Activated T-helper 2 cell treated with anti-CD3 and anti-CD28 coated beads, Interferon-gamma antibody, Interleukin-2, Interleukin-4, amounts not matched to agents 10 μg/mL and 5 μg/mL and 100 μg/mL, durations not matched to agents 14 hours and 24 hours and 36 hours (primary cell): ENCODE measurements at regions of chr11 and their contacts with region 1.

Region 1: GRCh38 chr11:47035108-47035507 is 98.5 kb downstream of the CSTPP1 start:
- DNase-seq: no peak
- H3K4me3 Mint-ChIP-seq: no peak overlapping the region
- H3K27ac Mint-ChIP-seq: no peak overlapping the region
- H3K4me1 Mint-ChIP-seq: no peaks in the 10 kb centered on the region
- H3K27me3 Mint-ChIP-seq: no peaks in the 10 kb centered on the region

Region 2: GRCh38 chr11:47047972-47048371 is 12.9 kb after region 1 on chr11:
- intact Hi-C with region 1: loop called (anchors 1 kb)
- DNase-seq: no peak
- H3K4me3 Mint-ChIP-seq: no peak overlapping the region
- H3K27ac Mint-ChIP-seq: no peak overlapping the region
- H3K4me1 Mint-ChIP-seq: no peaks in the 10 kb centered on the region
- H3K27me3 Mint-ChIP-seq: no peaks in the 10 kb centered on the region

Region 3: GRCh38 chr11:47104261-47104950 is 69.3 kb after region 1 on chr11:
- intact Hi-C with region 1: no loop called
- DNase-seq: no peak
- H3K4me3 Mint-ChIP-seq: no peak overlapping the region
- H3K27ac Mint-ChIP-seq: no peak overlapping the region
- H3K4me1 Mint-ChIP-seq: peaks cover 1% of the 10 kb centered on the region
- H3K27me3 Mint-ChIP-seq: no peaks in the 10 kb centered on the region

Region 4: DNA sequence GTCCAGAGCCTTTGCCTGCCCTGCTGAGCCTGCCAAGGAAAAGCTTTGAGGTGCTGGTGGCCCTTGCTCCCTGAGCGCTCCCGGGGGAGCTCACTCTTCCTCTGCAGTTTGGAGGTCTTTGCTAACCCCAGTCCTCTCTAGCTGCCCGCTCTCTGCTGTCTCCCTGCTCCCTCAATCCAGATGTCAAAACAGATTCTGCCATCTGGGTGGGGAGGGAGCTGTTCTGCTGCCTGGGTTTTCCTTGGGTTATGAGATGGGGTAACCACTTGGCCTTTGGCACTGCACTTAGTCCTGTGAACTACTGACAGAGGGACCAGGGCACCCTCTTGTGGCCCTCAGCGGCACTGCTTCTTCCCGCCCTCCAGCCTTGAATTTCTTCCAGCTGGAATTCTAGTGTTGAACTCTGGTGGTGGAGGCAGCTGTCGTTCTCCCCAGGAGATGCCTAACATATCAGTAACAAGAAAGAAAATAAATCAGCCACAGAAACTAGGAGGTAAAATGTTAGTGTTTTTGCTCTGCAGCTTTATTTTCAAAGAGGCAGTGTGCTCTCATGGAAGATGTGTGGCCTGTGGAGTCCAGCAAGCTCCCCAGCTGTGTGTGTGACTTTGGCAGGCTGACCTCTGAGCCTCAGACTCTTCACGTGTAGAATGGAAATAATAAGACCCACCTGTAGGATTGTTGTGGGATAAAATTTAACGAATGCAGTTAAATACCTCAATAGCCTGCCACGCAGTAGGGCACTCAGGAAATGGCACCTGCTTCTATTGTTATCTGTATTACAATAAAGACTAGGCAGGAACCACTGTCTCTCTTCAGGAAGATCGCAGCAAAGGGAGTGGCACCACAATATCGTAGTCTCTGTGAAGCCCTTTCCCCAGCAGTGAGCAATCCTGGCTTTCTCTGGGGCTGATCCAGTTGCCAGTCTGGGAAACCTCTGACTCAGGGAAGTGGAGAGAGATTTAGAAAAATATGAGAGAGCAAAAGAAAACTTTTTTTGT is 118.1 kb after region 1 on chr11:
- intact Hi-C with region 1: no loop called
- DNase-seq: peak; percentile 40
- H3K4me3 Mint-ChIP-seq: no peak overlapping the region
- H3K27ac Mint-ChIP-seq: no peak overlapping the region
- H3K4me1 Mint-ChIP-seq: peaks cover 18% of the 10 kb centered on the region
- H3K27me3 Mint-ChIP-seq: no peaks in the 10 kb centered on the region